ENCODE measurements at regions of chr11 and their contacts with region 1.

Region 1: DNA sequence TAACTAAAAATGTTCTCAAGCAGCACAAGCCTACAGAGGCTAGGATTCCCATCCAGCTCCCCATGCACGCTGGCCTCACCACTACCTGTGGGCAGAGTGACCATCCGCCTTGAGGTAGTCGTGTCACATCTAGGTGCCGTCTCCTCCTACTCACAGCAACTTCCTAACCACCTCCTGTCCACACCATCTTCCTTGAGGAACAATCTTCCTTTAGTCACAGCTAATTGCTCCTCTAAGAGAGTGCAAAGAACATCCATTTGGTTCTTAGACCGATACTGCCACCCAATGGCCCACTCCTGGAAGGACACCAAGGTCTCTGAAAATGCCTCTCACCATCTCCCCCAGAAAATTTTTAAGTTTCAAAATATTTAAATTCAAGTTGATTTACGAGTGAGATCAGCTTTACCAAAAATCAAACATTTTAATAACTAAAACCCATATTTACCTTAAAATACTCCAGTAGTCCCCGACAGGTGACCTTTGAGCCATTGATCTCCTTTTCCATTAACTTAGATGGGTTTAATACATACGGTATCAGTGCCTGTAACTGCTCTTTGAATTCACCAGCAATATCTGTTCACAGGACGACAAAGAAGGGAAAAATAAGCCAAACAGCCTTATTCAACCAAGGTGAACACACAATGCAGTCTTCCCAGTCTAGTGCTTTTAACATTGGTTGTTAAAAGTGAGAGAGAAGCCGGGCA is 21.7 kb upstream of the PLAAT3 start:
- DNase-seq: peak; percentile 52 to 92 (median 80)

Region 2: DNA sequence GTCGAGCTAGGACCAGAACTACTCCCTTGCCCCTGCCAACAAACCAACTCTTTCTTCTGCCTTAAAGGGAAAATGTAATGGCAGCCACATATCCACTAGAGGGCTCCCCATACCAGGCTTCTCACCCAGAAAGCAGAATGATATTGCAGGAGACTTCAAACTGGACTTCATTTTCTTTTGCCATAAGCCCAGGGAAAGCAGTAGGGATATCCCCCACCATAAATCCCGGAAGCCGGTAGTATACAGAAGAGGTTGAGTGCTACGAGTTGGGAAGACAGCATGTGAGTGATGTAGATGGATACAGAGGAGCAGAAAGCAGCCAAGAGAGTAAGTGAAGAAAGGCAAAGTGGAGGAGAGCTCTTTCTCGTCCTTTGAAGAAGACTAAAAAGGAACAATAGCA is 157.0 kb before region 1 on chr11:
- intact Hi-C with region 1: loop called (anchors 5 kb)
- DNase-seq: peak in 40 of 42 donors; percentile 24 to 88 (median 69)

Region 3: GRCh38 chr11:63490551-63491239 is 145.2 kb before region 1 on chr11 and contains the start of gene PLAAT5:
- intact Hi-C with region 1: loop called (anchors 5 kb)
- DNase-seq: peak in 31 of 42 donors; percentile 29 to 74 (median 50)

Measured in head of caudate nucleus (tissue), 42 donors.